ENCODE measurements at regions of chr16 and their contacts with region 1.

Region 1: GRCh38 chr16:50665128-50665878 is 15.8 kb downstream of the SNX20 start:
- DNase-seq: peak; percentile 93

Region 2: DNA sequence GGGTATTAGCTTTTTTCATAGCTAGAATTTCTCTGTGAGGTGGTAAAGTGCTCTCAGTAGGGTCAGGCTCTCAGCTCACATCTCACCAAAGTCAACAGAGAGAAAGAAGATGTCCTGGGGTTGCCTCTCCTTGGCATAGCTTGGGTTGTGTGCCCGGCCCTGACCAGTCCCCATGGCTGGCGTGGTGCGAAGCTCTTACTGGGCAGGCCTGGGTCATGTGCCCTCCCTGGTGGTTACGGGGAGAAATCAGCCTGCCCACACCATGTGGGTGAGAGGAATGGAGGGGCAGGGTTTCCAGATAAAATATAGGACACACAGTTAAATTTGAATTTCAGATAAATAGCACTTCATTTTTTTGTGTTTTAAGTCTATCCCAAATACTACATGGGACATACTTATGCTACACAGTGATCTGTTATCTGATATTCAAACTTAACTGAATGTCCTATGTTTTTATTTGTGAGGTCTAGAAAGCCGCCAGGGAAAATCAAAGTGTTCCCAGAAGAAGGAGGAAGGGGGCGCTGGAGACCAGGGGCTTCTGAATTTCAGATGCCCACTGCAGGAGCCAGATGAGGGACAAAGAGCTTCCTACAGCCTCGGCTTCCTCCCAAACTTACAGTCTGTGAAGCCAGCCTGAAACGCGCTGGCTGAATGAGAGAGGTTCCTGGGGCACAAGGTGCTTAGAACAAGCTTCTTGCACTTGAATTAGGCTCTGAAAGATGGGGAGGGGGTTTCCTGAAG is 71.7 kb before region 1 on chr16:
- intact Hi-C with region 1: loop called in 1 of 2 experiments (anchors 5 kb)
- DNase-seq: no peak

Region 3: DNA sequence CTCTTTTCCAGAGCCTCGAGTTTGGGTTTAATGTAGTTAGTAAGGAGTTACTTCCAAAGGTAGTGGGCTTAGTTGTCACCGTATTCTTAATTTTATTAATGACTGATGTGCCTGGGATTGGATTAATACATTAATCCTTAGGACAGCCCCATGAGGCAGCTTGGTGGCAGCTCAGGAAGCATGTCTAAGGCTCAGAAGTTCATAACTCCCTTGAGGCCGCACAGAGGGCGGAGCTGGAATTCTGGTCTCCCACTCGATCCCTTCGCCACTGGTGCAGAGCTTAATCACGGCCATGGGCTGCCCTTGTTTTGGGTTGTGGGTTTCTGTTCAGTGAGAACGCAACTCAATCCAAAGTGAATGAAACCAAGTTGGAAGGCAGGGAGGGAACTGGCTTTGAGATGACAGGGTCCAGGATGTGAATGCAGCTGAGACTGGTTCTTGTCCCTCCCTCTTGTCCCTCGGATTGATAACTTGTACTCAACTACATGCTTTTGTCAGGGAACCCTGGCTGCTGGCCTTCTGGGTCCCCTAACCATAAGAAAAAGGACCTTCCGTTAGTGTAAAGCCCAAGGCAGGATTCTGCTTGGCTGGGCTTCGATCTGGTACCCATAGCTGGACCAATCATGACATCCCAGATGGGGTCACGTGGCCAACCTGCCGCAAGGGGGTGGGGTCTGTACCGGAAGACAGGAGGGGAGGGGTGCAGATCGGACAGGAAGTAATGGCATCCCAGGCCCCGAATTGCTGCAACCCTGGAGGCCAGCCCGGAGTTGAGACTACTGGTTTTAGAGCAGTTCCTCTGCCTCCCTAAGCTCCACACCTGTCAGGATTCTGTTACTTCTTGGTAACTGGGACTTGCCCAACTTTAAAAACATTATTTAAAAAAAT is 29.6 kb before region 1 on chr16:
- intact Hi-C with region 1: no loop called
- DNase-seq: no peak

Region 4: GRCh38 chr16:50711862-50712559 is 46.7 kb after region 1 on chr16:
- intact Hi-C with region 1: no loop called
- DNase-seq: no peak

Region 5: DNA sequence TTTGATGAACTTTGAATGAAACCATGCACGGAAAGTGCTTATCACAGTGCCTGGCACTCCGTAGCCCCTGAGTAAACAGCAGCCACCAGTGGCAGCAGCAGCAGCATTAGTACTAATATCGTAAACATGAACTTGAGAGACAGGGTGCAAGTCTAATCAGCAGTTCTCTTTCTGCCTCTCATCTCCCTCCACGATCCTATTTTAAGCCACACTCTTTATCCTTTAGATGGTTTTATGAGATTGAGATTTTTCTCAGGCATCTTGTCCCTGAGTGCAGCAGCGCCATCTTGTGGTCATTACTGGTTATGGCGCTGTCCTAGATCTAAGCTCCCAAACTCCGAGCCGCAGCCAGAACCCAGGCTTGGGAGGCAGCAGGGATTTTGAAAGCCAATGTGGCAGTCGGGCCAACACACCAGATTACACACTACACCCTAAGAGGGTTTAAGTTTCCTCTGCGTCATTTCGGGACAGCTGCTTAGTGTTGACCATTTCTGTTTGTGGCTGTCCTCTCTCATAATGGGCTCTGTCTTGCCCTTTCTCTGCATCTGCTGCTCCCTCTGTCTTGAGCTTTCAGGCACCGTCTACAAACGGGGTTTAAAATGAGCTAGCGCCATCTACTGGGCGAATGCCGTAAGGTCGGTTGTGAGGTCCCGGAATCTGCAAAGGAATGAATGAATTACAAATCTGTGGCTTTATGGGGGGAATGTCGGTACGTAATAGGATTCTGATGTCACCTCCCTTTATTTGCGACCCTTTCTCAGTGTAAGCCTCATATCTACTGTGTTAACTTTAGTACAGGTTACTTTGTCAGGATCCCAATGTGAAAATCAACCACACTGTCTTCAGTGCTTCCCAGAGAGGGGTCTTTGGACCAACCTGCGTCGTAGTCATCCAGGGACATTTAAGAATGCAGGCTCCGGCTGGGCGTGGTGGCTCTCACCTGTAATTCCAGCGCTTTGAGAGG is 141.1 kb after region 1 on chr16:
- intact Hi-C with region 1: loop called in 1 of 2 experiments (anchors 5 kb)
- DNase-seq: peak; percentile 94

Region 6: DNA sequence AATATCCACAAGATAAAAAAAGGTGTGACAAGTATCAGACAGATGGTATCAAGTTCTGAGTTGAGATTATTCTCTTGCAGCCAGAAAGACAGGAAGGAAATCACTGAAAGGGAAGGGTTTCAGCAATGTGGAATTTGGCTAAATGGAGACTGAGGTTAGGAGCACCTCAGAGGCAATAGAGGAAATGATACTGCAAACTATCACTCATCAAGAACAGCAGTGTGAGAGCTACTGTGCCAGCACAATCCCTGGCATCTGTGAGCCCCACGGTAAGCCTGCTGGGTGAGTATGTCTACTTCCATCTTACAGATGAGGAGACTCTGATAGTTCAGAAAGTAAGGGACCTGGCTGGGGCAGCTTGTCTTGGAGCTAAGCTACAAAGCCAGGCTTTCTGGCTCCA is 323.7 kb after region 1 on chr16:
- intact Hi-C with region 1: no loop called
- DNase-seq: no peak

Measured in posterior vena cava (tissue), 2 donors.